ENCODE measurements at regions of chr13 and their contacts with region 1.

Region 1: DNA sequence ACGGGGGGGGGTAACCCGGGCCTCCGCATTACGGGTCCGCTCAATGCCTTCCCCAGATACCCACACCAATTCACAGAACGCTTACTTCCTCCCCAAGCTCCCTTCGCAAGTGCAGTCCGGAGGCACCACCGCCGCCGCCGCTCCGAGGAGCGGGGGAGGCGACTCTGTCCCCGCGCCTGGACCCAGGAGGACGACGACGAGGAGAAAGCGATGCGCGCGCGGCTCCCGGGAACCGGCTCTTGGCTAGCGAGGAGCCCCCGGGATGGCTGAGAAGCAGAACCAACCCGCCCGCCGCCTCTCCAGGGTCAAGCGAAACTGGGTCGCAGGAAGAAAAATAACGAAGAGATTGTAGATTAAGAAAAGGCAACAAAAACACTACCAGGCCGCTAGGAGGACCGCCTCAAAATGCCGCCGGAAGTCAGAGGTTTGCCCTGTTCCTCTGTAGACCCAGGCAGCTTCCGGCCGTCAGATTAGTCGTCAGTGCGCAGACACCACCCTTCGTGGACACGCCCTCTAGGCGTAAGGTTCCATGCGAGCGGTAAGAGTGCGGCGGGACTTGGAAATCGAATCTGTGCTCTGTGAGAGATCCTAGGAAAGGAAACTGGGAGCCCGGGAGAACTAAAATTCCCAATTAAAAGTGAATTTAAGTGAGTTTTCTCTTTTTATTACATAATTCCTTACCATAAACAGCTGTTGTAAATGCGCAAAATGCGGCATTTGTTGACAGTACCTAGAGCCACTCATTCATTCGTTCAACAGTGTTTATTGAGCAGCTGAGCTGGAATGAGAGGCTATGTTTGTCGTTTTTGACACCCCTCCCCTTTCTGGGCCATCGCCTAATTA is at the start of gene ZC3H13:
- DNase-seq: peak; percentile 91
- H3K4me3 Mint-ChIP-seq: peak within 1 kb of the TSS; percentile 95
- H3K27ac Mint-ChIP-seq: peak within 1 kb of the TSS; percentile 98
- H3K4me1 Mint-ChIP-seq: peaks cover 24% of the 10 kb centered on the region
- H3K27me3 Mint-ChIP-seq: peaks cover 14% of the 10 kb centered on the region
- total RNA-seq, gene ZC3H13: 55.2 and 56.6 TPM in 2 replicates

Region 2: GRCh38 chr13:46106839-46107371 is 54.4 kb after region 1 on chr13:
- intact Hi-C with region 1: loop called (anchors 5 kb)
- DNase-seq: no peak
- H3K4me3 Mint-ChIP-seq: no peak overlapping the region
- H3K27ac Mint-ChIP-seq: no peak overlapping the region
- H3K4me1 Mint-ChIP-seq: peaks cover 6% of the 10 kb centered on the region
- H3K27me3 Mint-ChIP-seq: peaks cover 39% of the 10 kb centered on the region

Region 3: DNA sequence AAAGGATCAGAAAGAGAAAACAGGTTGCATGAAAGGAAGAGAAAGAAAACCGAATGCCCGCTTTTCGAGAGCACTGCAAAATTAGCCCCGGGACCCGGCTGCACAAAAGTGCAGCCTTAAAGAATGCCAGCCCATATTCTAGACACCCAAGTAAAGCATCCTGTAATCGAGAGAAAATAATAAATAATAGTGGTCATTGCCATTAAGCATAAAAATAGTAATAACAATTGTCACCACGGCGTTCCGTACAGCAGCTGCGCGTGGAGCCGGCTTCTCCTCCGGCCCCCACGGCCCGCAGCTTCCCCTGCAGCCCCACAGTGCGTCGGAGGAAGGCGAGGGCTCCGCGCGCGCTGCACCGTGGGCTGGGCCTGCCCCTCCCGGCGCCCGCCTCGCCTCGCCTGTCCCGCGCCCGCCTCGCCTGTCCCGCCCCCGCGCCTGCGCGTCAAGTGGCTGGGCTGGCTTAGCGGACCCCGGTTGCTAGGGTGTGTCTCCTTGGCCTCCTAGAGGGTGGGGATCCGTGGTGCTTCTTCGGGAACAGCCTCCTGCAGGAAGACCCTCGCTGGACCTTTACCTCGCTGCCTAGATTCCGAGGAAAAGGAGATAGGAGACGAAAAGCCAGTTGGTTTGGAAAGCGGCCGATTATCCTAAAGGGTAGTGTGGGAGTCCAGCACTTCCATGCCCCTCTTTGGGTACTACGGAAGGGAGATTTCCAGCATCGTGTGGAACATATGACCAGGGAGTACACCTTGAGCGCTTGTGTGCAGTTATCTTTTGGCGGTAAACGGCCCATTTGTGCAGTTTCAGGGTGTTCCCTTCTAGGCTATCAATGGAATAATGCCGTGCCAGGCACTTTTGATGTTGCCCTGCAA is 159.2 kb after region 1 on chr13 and contains the start of gene LRRC63:
- intact Hi-C with region 1: loop called (anchors 5 kb)
- DNase-seq: peak; percentile 83
- H3K4me3 Mint-ChIP-seq: peak within 1 kb of the TSS; percentile 89
- H3K27ac Mint-ChIP-seq: peak within 1 kb of the TSS; percentile 92
- H3K4me1 Mint-ChIP-seq: peaks cover 37% of the 10 kb centered on the region
- H3K27me3 Mint-ChIP-seq: peaks cover 4% of the 10 kb centered on the region
- total RNA-seq, gene LRRC63: 0.52 and 0.71 TPM in 2 replicates

Region 4: GRCh38 chr13:46288570-46289259 is 236.2 kb after region 1 on chr13:
- intact Hi-C with region 1: loop called (anchors 2 kb)
- DNase-seq: no peak
- H3K4me3 Mint-ChIP-seq: no peak overlapping the region
- H3K27ac Mint-ChIP-seq: no peak overlapping the region
- H3K4me1 Mint-ChIP-seq: peaks cover 23% of the 10 kb centered on the region
- H3K27me3 Mint-ChIP-seq: no peaks in the 10 kb centered on the region

Measured in activated T-helper 2 cell treated with anti-CD3 and anti-CD28 coated beads, Interferon-gamma antibody, Interleukin-2, Interleukin-4, amounts not matched to agents 10 μg/mL and 5 μg/mL and 100 μg/mL, durations not matched to agents 14 hours and 24 hours and 36 hours (primary cell).